ENCODE measurements at regions of chr5 and their contacts with region 1.

Region 1: DNA sequence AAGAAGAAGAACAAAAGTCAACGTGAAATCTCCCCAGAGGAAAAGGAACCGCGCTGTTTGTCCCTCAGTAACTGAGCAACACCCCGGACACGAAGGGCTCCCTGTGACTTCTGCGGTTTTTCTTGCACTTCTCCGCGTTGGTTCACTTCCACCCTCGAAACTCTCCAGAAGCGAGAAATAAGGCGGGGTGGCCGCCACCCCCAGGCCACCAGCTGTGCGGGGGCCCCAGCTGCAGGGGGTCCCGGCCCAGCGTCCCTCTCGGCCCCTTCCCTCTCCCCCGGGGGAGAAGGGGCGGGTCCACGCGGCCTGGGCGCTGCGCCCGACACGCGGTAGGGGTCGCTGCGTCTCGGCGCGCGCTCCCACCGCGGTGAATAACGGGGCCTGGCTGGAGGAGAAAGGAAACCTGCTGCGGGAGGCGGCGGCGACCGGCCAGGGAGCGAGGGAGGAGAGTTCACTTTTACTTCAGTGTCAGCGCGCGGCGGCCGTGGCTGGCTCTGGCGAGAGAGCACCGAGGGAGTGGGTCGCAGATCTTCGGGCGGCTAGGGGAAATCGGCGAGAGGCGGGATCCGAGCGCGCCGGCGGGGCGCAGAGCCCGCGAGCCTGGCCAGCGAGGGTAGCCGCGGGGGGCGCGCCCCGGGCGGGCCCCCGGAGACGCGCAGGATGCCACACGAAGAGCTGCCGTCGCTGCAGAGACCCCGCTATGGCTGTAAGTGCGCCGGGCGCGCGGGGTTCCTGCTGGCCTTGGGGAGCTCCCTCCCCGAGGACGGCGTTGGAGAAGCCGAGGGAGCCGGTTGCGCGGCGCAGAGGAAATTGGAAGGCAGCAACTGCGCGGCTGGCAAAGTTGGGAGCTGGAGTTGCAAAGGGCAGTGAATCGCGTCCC is at the start of gene IQGAP2:
- DNase-seq: peak; percentile 85
- H3K4me3 Mint-ChIP-seq: peak within 1 kb of the TSS; percentile 90
- H3K27ac Mint-ChIP-seq: peak within 1 kb of the TSS; percentile 73
- H3K4me1 Mint-ChIP-seq: peaks cover 10% of the 10 kb centered on the region
- H3K27me3 Mint-ChIP-seq: peaks cover 36% of the 10 kb centered on the region
- CTCF ChIP-seq: peak; percentile 79
- total RNA-seq, gene IQGAP2: 13.4 and 25.0 TPM in 2 replicates

Region 2: GRCh38 chr5:76291305-76292077 is 111.6 kb before region 1 on chr5:
- CTCF ChIA-PET with region 1: interaction called, 4 read pairs
- intact Hi-C with region 1: loop called (anchors 2 kb)
- DNase-seq: peak; percentile 92
- H3K4me3 Mint-ChIP-seq: peak overlapping the region; percentile 37
- H3K27ac Mint-ChIP-seq: peak overlapping the region; percentile 94
- H3K4me1 Mint-ChIP-seq: peaks cover 68% of the 10 kb centered on the region
- H3K27me3 Mint-ChIP-seq: no peaks in the 10 kb centered on the region
- CTCF ChIP-seq: no peak

Region 3: GRCh38 chr5:76337953-76338451 is 65.1 kb before region 1 on chr5:
- CTCF ChIA-PET with region 1: interaction called, 3 read pairs
- intact Hi-C with region 1: loop called (anchors 1 kb)
- DNase-seq: peak; percentile 79
- H3K4me3 Mint-ChIP-seq: no peak overlapping the region
- H3K27ac Mint-ChIP-seq: no peak overlapping the region
- H3K4me1 Mint-ChIP-seq: peaks cover 9% of the 10 kb centered on the region
- H3K27me3 Mint-ChIP-seq: no peaks in the 10 kb centered on the region
- CTCF ChIP-seq: peak; percentile 70

Region 4: GRCh38 chr5:76457674-76458485 is 54.8 kb after region 1 on chr5:
- CTCF ChIA-PET with region 1: no interaction called
- intact Hi-C with region 1: loop called (anchors 5 kb)
- DNase-seq: peak; percentile 45
- H3K4me3 Mint-ChIP-seq: no peak overlapping the region
- H3K27ac Mint-ChIP-seq: peak overlapping the region; percentile 7
- H3K4me1 Mint-ChIP-seq: peaks cover 37% of the 10 kb centered on the region
- H3K27me3 Mint-ChIP-seq: no peaks in the 10 kb centered on the region
- CTCF ChIP-seq: no peak

Region 5: GRCh38 chr5:76544268-76544926 is 141.3 kb after region 1 on chr5:
- CTCF ChIA-PET with region 1: interaction called, 14 read pairs
- intact Hi-C with region 1: loop called (anchors 1 kb)
- DNase-seq: peak; percentile 70
- H3K4me3 Mint-ChIP-seq: no peak overlapping the region
- H3K27ac Mint-ChIP-seq: no peak overlapping the region
- H3K4me1 Mint-ChIP-seq: peaks cover 48% of the 10 kb centered on the region
- H3K27me3 Mint-ChIP-seq: peaks cover 18% of the 10 kb centered on the region
- CTCF ChIP-seq: peak; percentile 81

Region 6: GRCh38 chr5:76582230-76583162 is 179.4 kb after region 1 on chr5:
- CTCF ChIA-PET with region 1: interaction called, 11 read pairs
- intact Hi-C with region 1: loop called (anchors 1 kb)
- DNase-seq: no peak
- H3K4me3 Mint-ChIP-seq: no peak overlapping the region
- H3K27ac Mint-ChIP-seq: no peak overlapping the region
- H3K4me1 Mint-ChIP-seq: no peaks in the 10 kb centered on the region
- H3K27me3 Mint-ChIP-seq: no peaks in the 10 kb centered on the region
- CTCF ChIP-seq: no peak

Region 7: GRCh38 chr5:76689321-76690036 is 286.4 kb after region 1 on chr5:
- CTCF ChIA-PET with region 1: no interaction called
- intact Hi-C with region 1: no loop called
- DNase-seq: no peak
- H3K4me3 Mint-ChIP-seq: no peak overlapping the region
- H3K27ac Mint-ChIP-seq: peak overlapping the region; percentile 13
- H3K4me1 Mint-ChIP-seq: peaks cover 44% of the 10 kb centered on the region
- H3K27me3 Mint-ChIP-seq: no peaks in the 10 kb centered on the region
- CTCF ChIP-seq: no peak

Measured in Calu3 (cell line).